Kidney (tissue), 22 donors: ENCODE measurements at regions of chr10 and their contacts with region 1.

Region 1: GRCh38 chr10:103602028-103602851 is 108.7 kb downstream of the NEURL1 start:
- DNase-seq: no peak
- H3K4me3 ChIP-seq: no peak overlapping the region
- H3K27ac ChIP-seq: no peak overlapping the region
- H3K4me1 ChIP-seq: no peaks in the 10 kb centered on the region
- H3K27me3 ChIP-seq: no peaks in the 10 kb centered on the region
- CTCF ChIP-seq: no peak

Region 2: GRCh38 chr10:103685880-103686669 is 83.8 kb after region 1 on chr10:
- intact Hi-C with region 1: loop called (anchors 5 kb)
- DNase-seq: peak; percentile 79 to 88 (median 84)
- H3K4me3 ChIP-seq: no peak overlapping the region
- H3K27ac ChIP-seq: no peak overlapping the region
- H3K4me1 ChIP-seq: peaks cover 0 to 6% (median 4%) of the 10 kb centered on the region in 3 donors
- H3K27me3 ChIP-seq: no peaks in the 10 kb centered on the region
- CTCF ChIP-seq: peak; percentile 96

Region 3: DNA sequence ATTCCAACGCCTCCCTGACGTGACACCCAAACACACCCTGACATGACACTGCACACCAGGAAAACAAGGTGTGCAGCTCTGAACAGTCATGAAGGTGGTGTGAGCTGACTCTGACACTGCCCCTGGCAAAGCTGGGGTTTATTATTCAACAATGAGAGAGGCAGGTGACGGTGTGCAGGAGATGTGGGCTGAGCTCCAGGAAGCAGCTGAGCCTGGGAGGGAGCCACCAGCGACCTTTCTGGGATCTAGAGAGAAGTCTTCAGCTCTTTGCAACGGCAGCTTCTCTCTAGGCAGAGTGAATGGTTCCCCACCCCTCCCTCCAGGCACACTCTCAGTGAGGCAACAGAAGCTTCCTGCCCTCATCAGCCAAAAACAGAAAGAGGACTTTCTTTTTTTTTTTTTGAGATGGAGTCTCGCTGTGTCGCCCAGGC is 187.5 kb after region 1 on chr10:
- intact Hi-C with region 1: no loop called
- DNase-seq: no peak
- H3K4me3 ChIP-seq: no peak overlapping the region
- H3K27ac ChIP-seq: no peak overlapping the region
- H3K4me1 ChIP-seq: no peaks in the 10 kb centered on the region
- H3K27me3 ChIP-seq: no peaks in the 10 kb centered on the region
- CTCF ChIP-seq: no peak